ENCODE measurements at regions of chr20 and their contacts with region 1.

Region 1: GRCh38 chr20:39049684-39050554 is 87.8 kb downstream of the DHX35 start:
- DNase-seq: peak; percentile 80 to 93 (median 92)
- ATAC-seq: peak; percentile 83 to 89
- H3K4me3 ChIP-seq: peak overlapping the region; percentile 53
- H3K27ac ChIP-seq: no peak overlapping the region
- H3K4me1 ChIP-seq: no peaks in the 10 kb centered on the region
- H3K27me3 ChIP-seq: no peaks in the 10 kb centered on the region

Region 2: DNA sequence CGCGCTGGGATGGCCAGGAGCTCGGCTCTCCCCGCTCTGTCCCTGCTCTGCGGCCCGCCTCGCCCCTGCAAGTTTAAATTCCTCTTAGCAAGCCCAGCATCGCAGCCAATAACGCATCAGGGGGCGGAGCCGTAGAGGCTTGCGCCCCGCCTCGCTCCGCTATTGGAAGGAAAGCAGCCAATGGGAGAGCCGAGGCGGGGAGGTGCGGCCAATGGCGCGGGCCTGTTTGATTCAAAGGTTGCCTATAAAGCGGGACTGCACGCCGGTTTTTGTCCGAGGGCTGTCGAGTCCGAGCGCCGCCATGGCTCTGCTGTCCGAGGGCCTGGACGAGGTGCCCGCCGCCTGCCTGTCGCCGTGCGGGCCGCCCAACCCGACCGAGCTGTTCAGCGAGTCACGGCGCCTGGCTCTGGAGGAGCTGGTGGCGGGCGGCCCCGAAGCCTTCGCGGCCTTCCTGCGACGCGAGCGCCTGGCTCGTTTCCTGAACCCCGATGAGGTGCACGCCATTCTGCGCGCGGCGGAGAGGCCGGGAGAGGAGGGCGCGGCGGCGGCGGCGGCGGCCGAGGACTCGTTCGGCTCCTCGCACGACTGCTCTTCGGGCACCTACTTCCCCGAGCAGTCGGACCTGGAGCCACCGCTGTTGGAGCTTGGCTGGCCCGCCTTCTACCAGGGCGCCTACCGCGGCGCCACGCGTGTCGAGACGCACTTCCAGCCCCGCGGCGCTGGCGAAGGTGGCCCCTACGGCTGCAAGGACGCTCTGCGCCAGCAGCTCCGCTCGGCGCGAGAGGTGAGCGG is 123.6 kb before region 1 on chr20 and contains the start of gene FAM83D:
- intact Hi-C with region 1: loop called in 3 of 4 experiments (anchors 5 kb)
- DNase-seq: peak; percentile 94 to 97 (median 97)
- ATAC-seq: peak; percentile 97 to 99
- H3K4me3 ChIP-seq: peak within 1 kb of the TSS; percentile 59
- H3K27ac ChIP-seq: no peak within 1 kb of the TSS
- H3K4me1 ChIP-seq: peaks cover 2% of the 10 kb centered on the region
- H3K27me3 ChIP-seq: no peaks in the 10 kb centered on the region
- total RNA-seq, gene FAM83D: 0.62 to 0.95 (median 0.78) TPM

Measured in right cardiac atrium (tissue), 5 donors.